ENCODE measurements at regions of chr10 and their contacts with region 1.

Region 1: GRCh38 chr10:133373104-133373624 is at the start of gene ECHS1:
- DNase-seq: peak; percentile 72 to 93
- H3K4me3 ChIP-seq: peak within 1 kb of the TSS; percentile 61; the same call in 1 of the 2 replicates
- H3K27ac ChIP-seq: no peak within 1 kb of the TSS
- H3K4me1 ChIP-seq: no peaks in the 10 kb centered on the region; the same call in 1 of the 2 replicates
- H3K27me3 ChIP-seq: no peaks in the 10 kb centered on the region
- CTCF ChIP-seq: no peak
- total RNA-seq, gene ECHS1: 86.6 and 90.7 TPM in 2 replicates

Region 2: GRCh38 chr10:133196221-133196915 is 176.8 kb before region 1 on chr10:
- CTCF ChIA-PET with region 1: no interaction called
- POLR2A ChIA-PET with region 1: no interaction called
- intact Hi-C with region 1: no loop called
- DNase-seq: no peak
- H3K4me3 ChIP-seq: no peak overlapping the region
- H3K27ac ChIP-seq: no peak overlapping the region
- H3K4me1 ChIP-seq: no peaks in the 10 kb centered on the region
- H3K27me3 ChIP-seq: peaks cover 35% of the 10 kb centered on the region
- CTCF ChIP-seq: no peak

Region 3: DNA sequence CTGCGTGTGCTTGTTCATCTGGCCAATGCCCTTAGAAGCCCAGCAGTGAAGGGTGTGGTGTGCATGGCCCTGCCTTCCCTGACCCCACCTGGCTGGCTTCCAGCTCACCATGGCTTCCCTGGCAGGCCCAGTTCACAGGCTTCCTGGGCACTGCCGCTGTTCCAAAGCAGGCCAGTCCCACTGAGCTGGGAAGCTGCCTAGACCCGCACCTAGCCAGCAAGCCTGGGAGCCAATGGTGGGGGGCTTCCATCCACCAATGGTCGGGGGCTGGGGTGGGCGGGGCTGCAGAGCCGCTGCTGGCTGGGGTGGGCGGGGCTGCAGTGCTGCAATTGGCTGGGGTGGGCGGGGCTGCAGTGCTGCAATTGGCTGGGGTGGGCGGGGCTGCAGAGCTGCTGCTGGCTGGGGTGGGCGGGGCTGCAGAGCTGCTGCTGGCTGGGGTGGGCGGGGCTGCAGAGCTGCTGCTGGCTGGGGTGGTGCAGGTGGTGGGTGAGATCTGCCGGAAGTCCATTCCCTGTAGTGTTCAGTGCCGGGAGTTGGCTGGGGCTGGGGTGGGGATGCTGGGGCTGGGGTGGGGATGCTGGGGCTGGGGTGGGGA is 48.9 kb before region 1 on chr10:
- CTCF ChIA-PET with region 1: no interaction called
- POLR2A ChIA-PET with region 1: interaction called, 12 read pairs
- intact Hi-C with region 1: no loop called
- DNase-seq: peak; percentile 53 to 70
- H3K4me3 ChIP-seq: peak overlapping the region; percentile 52; the same call in 1 of the 2 replicates
- H3K27ac ChIP-seq: no peak overlapping the region
- H3K4me1 ChIP-seq: no peaks in the 10 kb centered on the region
- H3K27me3 ChIP-seq: no peaks in the 10 kb centered on the region
- CTCF ChIP-seq: no peak

Region 4: GRCh38 chr10:133520155-133520738 is 147.1 kb after region 1 on chr10:
- CTCF ChIA-PET with region 1: no interaction called
- POLR2A ChIA-PET with region 1: no interaction called
- intact Hi-C with region 1: loop called (anchors 10 kb)
- DNase-seq: peak in 1 of 2 experiments; percentile 83
- H3K4me3 ChIP-seq: no peak overlapping the region; the same call in 1 of the 2 replicates
- H3K27ac ChIP-seq: no peak overlapping the region
- H3K4me1 ChIP-seq: 0 out of 2 replicates have a peak, but pooled peaks cover 4% of the 10 kb centered on the region
- H3K27me3 ChIP-seq: no peaks in the 10 kb centered on the region
- CTCF ChIP-seq: peak; percentile 64

Measured in PC-9 (cell line).